HepG2 (cell line): ENCODE measurements at regions of chr19 and their contacts with region 1.

Region 1: GRCh38 chr19:41263850-41264580 is at the start of gene HNRNPUL1:
- DNase-seq: peak; percentile 100
- ATAC-seq: peak; percentile 64
- H3K4me3 ChIP-seq: peak within 1 kb of the TSS; percentile 73 to 93 (median 90)
- H3K27ac ChIP-seq: peak within 1 kb of the TSS; percentile 97
- H3K4me1 ChIP-seq: peaks cover 28% of the 10 kb centered on the region
- H3K27me3 ChIP-seq: no peaks in the 10 kb centered on the region; a peak in 1 of 5 replicates
- CTCF ChIP-seq: peak; percentile 20; the same call in 1 of the 2 replicates
- EP300 ChIP-seq: 0 out of 4 replicates have a peak, but pooled peaks of 1 of the 2 experiments have one; percentile 6
- POLR2A ChIP-seq: peak in 1 of 2 experiments; percentile 25; a peak in 3 of 4 replicates
- RAD21 ChIP-seq: peak; percentile 36
- total RNA-seq, gene HNRNPUL1: 81.7 and 88.8 TPM in 2 replicates

Region 2: GRCh38 chr19:41192574-41193429 is 71.2 kb before region 1 on chr19 and contains the start of gene CYP2S1:
- CTCF ChIA-PET with region 1: no interaction called
- POLR2A ChIA-PET with region 1: interaction called, 11 read pairs
- in situ Hi-C with region 1: no loop called
- intact Hi-C with region 1: no loop called
- DNase-seq: no peak
- ATAC-seq: peak; percentile 84
- H3K4me3 ChIP-seq: peak within 1 kb of the TSS; percentile 58 to 72 (median 58)
- H3K27ac ChIP-seq: no peak within 1 kb of the TSS
- H3K4me1 ChIP-seq: peaks cover 48% of the 10 kb centered on the region
- H3K27me3 ChIP-seq: peaks cover 0 to 24% of the 10 kb centered on the region in 2 experiments; a peak in 2 of 5 replicates
- CTCF ChIP-seq: no peak
- EP300 ChIP-seq: no peak
- POLR2A ChIP-seq: no peak
- RAD21 ChIP-seq: no peak
- total RNA-seq, gene CYP2S1: 0.09 TPM in 1 of 2 replicates, not detected in the other

Region 3: GRCh38 chr19:41218615-41219507 is 45.2 kb before region 1 on chr19 and contains the start of gene AXL:
- CTCF ChIA-PET with region 1: no interaction called
- POLR2A ChIA-PET with region 1: interaction called, 104 read pairs
- in situ Hi-C with region 1: no loop called
- intact Hi-C with region 1: no loop called
- DNase-seq: peak; percentile 25
- ATAC-seq: peak; percentile 71
- H3K4me3 ChIP-seq: peak within 1 kb of the TSS; percentile 52 to 72 (median 55); a peak in 5 of 6 replicates
- H3K27ac ChIP-seq: no peak within 1 kb of the TSS
- H3K4me1 ChIP-seq: peaks cover 51% of the 10 kb centered on the region
- H3K27me3 ChIP-seq: peaks cover 0 to 4% of the 10 kb centered on the region in 2 experiments; a peak in 1 of 5 replicates
- CTCF ChIP-seq: no peak
- EP300 ChIP-seq: no peak
- POLR2A ChIP-seq: no peak
- RAD21 ChIP-seq: no peak
- total RNA-seq, gene AXL: 0.31 and 0.71 TPM in 2 replicates

Region 4: DNA sequence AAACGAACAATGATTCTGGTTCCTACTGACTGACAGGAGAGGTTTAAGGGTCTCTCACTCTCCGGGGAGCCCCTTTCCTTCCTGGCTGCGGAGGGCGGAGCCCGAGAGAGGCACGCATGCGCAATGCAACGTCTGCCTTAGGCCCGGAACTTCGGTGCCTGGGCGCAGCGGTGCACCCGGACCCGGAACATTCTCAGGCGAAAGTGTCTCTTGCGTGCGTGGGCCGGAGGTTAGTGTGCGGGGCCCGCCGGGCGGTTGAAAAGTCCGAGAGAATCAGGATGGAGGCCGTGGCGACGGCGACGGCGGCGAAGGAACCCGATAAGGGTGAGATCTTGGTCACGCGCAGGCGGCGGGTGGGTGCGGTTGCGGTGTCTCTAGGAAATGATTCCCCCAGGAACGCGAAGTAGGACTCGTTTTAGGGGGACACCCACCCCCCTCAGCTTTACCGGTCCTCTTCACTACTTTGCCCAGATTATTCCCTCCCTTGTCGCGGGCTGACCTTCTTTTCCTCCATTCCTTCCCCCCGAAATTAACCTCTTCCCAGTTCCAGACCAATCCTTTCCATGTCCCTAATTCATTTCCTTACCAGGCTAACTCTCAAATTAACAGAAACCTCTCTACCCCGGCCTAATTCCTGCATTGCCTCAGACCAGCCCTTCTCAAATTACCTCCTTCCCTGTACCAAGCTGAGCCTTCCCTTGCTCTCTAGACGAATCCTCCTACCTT is 46.2 kb after region 1 on chr19 and contains the start of gene CCDC97:
- CTCF ChIA-PET with region 1: no interaction called
- POLR2A ChIA-PET with region 1: interaction called, 31 read pairs
- in situ Hi-C with region 1: loop called (anchors 5 kb)
- intact Hi-C with region 1: loop called (anchors 2 kb)
- DNase-seq: peak; percentile 75
- ATAC-seq: peak; percentile 69
- H3K4me3 ChIP-seq: peak within 1 kb of the TSS; percentile 72 to 90 (median 85)
- H3K27ac ChIP-seq: peak within 1 kb of the TSS; percentile 91
- H3K4me1 ChIP-seq: peaks cover 28% of the 10 kb centered on the region
- H3K27me3 ChIP-seq: no peaks in the 10 kb centered on the region
- CTCF ChIP-seq: no peak; the same call in 1 of the 2 replicates
- EP300 ChIP-seq: peak in 1 of 2 experiments; percentile 37; a peak in 1 of 4 replicates
- POLR2A ChIP-seq: peak; percentile 74 to 78
- RAD21 ChIP-seq: peak; percentile 24; the same call in 1 of the 2 replicates
- total RNA-seq, gene CCDC97: 7.1 and 7.3 TPM in 2 replicates

Region 5: GRCh38 chr19:41353466-41354342 is 89.7 kb after region 1 on chr19 and contains the start of gene TGFB1:
- CTCF ChIA-PET with region 1: no interaction called
- POLR2A ChIA-PET with region 1: interaction called, 20 read pairs
- in situ Hi-C with region 1: no loop called
- intact Hi-C with region 1: no loop called
- DNase-seq: peak; percentile 70
- ATAC-seq: peak; percentile 69
- H3K4me3 ChIP-seq: peak within 1 kb of the TSS; percentile 90 to 95 (median 95)
- H3K27ac ChIP-seq: peak within 1 kb of the TSS; percentile 60
- H3K4me1 ChIP-seq: peaks cover 32% of the 10 kb centered on the region
- H3K27me3 ChIP-seq: no peaks in the 10 kb centered on the region; a peak in 2 of 5 replicates
- CTCF ChIP-seq: peak; percentile 93
- EP300 ChIP-seq: no peak
- POLR2A ChIP-seq: peak in 1 of 2 experiments; percentile 61; a peak in 1 of 4 replicates
- RAD21 ChIP-seq: peak; percentile 29; the same call in 1 of the 2 replicates
- total RNA-seq, gene TGFB1: 2.7 and 4.1 TPM in 2 replicates

Region 6: GRCh38 chr19:41439441-41440222 is 175.6 kb after region 1 on chr19 and contains the start of gene DMAC2:
- CTCF ChIA-PET with region 1: no interaction called
- POLR2A ChIA-PET with region 1: interaction called, 11 read pairs
- in situ Hi-C with region 1: no loop called
- intact Hi-C with region 1: no loop called
- DNase-seq: peak; percentile 98
- ATAC-seq: peak; percentile 94
- H3K4me3 ChIP-seq: peak within 1 kb of the TSS; percentile 71 to 94 (median 77)
- H3K27ac ChIP-seq: peak within 1 kb of the TSS; percentile 95
- H3K4me1 ChIP-seq: peaks cover 45% of the 10 kb centered on the region
- H3K27me3 ChIP-seq: no peaks in the 10 kb centered on the region
- CTCF ChIP-seq: peak; percentile 83
- EP300 ChIP-seq: no peak
- POLR2A ChIP-seq: peak; percentile 84 to 91
- RAD21 ChIP-seq: peak; percentile 28; the same call in 1 of the 2 replicates
- total RNA-seq, gene DMAC2: 39.0 and 51.9 TPM in 2 replicates